Dendritic cell treated with granulocyte-macrophage colony-stimulating factor and Interleukin-4, amounts not matched to agents 40 ng/mL and 50 ng/mL, for 4 days (primary cell): ENCODE measurements at regions of chr9 and their contacts with region 1.

Region 1: DNA sequence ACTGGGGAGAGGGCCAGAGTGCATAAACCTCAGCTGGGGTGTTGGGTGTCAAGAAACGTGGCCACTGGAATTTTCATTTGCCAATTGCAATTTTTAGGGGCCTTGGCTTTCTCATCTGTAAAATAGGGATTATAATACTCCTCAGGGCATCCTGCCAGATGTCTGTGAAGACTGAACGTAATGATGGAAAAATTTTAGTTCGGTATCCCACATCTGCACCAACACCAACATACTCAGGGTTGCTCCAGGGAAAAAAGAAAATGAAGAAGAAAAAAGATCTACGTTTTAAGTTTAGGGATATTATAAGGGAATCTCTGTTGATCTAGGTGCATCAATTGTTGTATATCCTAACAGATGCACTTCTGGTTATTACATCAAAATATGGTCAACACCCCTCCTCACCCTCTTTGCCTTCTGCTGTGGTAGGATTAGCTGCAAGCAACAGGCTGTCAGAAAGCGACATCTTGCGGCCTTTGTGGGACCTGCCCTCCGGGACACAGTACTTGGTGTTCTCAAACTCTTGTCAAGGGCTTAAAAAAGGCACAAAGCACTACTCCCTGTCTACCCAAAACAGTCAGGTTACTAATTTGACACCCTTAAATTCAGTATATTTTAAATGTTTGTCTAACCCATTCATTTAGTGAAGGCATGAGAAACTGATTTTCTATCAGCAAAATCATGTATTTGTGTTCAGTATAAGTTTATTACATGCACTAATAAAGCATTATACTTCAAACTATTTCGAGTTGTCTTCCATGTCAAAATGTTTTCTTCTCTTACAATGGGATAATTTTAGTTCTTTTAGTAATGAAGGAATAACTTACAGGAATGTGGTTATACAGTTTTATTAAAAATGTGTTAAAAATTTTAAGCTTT is 8.3 kb upstream of the TBC1D2 start:
- H3K4me3 Mint-ChIP-seq: no peak overlapping the region
- H3K27ac Mint-ChIP-seq: no peak overlapping the region
- H3K4me1 Mint-ChIP-seq: no peaks in the 10 kb centered on the region
- H3K27me3 Mint-ChIP-seq: peaks cover 3% of the 10 kb centered on the region

Region 2: GRCh38 chr9:98074115-98074990 is 189.4 kb before region 1 on chr9:
- intact Hi-C with region 1: loop called (anchors 1 kb)
- H3K4me3 Mint-ChIP-seq: no peak overlapping the region
- H3K27ac Mint-ChIP-seq: peak overlapping the region; percentile 63
- H3K4me1 Mint-ChIP-seq: peaks cover 40% of the 10 kb centered on the region
- H3K27me3 Mint-ChIP-seq: no peaks in the 10 kb centered on the region

Region 3: GRCh38 chr9:98326459-98327248 is 62.9 kb after region 1 on chr9:
- intact Hi-C with region 1: no loop called
- H3K4me3 Mint-ChIP-seq: no peak overlapping the region
- H3K27ac Mint-ChIP-seq: no peak overlapping the region
- H3K4me1 Mint-ChIP-seq: peaks cover 5% of the 10 kb centered on the region
- H3K27me3 Mint-ChIP-seq: peaks cover 15% of the 10 kb centered on the region